Right cardiac atrium (tissue), 5 donors: ENCODE measurements at regions of chr6 and their contacts with region 1.

Region 1: GRCh38 chr6:43454696-43455530 is 435 bp downstream of the DLK2 start:
- DNase-seq: peak; percentile 88 to 95 (median 95)
- ATAC-seq: peak; percentile 87 to 91
- H3K4me3 ChIP-seq: peak overlapping the region; percentile 36
- H3K27ac ChIP-seq: no peak overlapping the region
- H3K4me1 ChIP-seq: no peaks in the 10 kb centered on the region
- H3K27me3 ChIP-seq: no peaks in the 10 kb centered on the region

Region 2: DNA sequence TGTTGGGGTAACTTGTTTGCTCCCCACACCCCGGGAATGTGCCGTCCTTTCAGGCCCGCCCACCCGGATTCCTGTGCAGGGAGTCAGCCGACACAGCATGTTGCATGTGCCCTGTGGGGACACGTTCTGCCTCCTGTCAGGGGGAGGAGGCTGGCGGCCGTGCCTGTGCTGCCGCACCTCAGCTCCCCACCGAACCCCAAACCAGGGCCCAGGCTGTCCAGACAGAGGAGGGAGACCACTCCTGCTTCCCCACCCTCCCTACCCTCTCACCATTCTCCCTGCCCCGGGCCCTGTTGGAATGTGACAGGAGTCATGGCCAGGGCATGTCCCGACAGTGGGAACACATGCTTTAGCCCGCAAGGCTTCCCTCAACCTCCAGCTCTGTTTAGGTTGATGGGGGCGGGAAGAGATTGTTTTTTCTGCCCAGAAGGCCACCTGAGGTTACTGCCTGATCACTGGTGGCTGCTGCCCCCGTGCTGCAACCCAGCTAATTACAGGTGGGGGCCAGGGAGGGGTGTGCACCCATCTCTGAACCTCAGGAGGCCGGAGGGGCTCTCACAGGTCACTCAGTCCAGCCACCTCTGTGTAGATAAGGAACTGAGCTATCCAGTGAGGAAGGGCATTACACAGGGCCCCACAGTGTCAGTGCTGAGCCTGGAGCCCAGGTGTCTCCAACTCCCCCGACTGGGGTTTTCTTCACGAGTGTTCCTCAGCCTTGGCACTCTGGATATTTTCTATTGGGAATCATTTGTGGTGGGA is 41.6 kb after region 1 on chr6:
- intact Hi-C with region 1: loop called in 2 of 4 experiments (anchors 5 kb)
- DNase-seq: peak in 2 of 3 donors; percentile 71 to 73
- ATAC-seq: peak in 1 of 2 donors; percentile 7
- H3K4me3 ChIP-seq: no peak overlapping the region
- H3K27ac ChIP-seq: no peak overlapping the region
- H3K4me1 ChIP-seq: peaks cover 20% of the 10 kb centered on the region
- H3K27me3 ChIP-seq: no peaks in the 10 kb centered on the region